ENCODE measurements at regions of chr9 and their contacts with region 1.

Region 1: DNA sequence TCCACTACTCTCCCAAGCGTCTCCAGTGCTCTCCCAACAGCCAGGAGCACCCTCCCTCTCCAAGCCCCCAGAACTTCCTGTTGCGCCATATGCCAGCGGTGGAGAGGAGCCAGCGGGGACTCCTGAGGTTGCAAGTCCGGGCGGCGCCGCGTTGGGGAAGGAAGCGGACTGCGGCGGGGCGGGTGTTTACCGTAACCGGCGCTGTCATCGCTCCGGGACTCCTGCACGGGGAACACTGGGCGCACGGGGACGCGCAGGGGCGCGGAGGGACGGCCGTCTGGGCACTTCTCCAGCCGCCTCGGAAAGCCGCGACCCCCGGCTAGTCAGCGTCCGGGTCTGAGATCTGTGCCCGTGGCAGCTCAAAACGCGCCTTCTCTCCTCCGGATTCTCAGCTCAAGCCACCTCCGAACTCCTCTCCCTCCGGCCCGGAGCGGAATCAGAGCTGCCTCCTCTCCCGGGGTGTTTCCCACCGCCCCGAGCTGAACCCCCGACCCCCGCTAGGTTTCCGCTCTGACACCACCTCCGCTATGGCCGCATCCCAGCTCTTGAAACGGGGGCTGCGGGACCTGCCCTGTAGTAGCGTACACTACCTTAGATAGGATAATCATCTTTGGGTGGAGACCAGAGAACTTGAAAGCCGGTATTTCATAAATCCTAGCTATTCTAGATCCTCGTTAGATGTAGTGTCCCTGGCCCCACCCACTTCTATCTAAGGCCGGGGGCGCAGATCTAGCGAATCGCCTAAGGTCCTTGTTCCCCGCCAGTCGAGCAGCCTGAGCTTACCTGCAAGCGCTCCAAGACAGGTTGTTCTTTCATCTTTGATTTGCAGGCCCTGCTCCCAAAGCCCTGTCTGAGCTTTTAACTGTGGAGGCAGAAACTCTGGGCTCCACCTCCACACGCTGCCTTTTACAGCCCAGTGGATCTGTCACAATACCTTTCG is at the start of gene TRPM6:
- DNase-seq: peak; percentile 76 to 82
- ATAC-seq: peak; percentile 90 to 97 (median 96)
- H3K4me3 ChIP-seq: peak within 1 kb of the TSS in 9 of 10 donors; percentile 41 to 69 (median 66)
- H3K27ac ChIP-seq: peak within 1 kb of the TSS; percentile 25 to 87 (median 78)
- H3K4me1 ChIP-seq: peaks cover 0 to 16% (median 9%) of the 10 kb centered on the region in 9 donors
- H3K27me3 ChIP-seq: peaks cover 0 to 30% (median 10%) of the 10 kb centered on the region in 7 donors
- CTCF ChIP-seq: no peak
- total RNA-seq, gene TRPM6: 0.11 to 0.60 (median 0.21) TPM

Region 2: DNA sequence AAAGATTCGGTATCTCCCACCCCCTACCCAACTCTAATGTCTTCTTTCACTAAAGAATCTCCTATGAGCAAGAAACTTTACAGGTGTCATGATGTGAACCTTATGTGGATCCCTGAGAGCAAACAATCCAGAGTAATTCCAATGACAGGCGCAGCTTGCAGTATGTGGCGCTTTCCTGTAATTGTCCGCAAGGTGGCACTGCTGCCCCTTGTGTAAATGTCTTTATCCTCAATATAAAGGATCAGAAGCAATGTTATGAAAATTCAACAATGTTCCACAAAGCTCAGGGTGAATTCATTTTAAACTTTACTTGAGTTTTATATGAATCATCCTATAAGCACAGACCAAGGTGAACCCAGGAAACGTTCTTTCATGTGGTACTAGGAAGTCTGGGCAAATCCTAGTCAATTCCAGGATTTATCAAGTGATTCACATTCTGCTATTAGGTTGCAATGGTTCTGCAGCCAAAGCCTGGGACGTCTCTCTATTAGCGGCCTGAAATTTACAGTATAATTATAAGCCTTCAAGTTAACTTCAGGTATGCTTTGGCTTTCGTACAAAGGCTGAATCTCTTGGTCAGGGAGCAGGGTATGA is 113.3 kb before region 1 on chr9:
- intact Hi-C with region 1: loop called in 1 of 10 experiments (anchors 10 kb)
- DNase-seq: peak; percentile 65
- ATAC-seq: peak in 7 of 8 donors; percentile 40 to 83 (median 74)
- H3K4me3 ChIP-seq: no peak overlapping the region
- H3K27ac ChIP-seq: no peak overlapping the region
- H3K4me1 ChIP-seq: peaks cover 0 to 9% (median 0%) of the 10 kb centered on the region in 9 donors
- H3K27me3 ChIP-seq: peaks cover 0 to 23% (median 0%) of the 10 kb centered on the region in 7 donors
- CTCF ChIP-seq: peak; percentile 76 to 97 (median 93)

Region 3: GRCh38 chr9:74783408-74783807 is 103.9 kb before region 1 on chr9:
- intact Hi-C with region 1: loop called in 3 of 10 experiments (anchors 10 kb)
- DNase-seq: no peak
- ATAC-seq: no peak
- H3K4me3 ChIP-seq: no peak overlapping the region
- H3K27ac ChIP-seq: no peak overlapping the region
- H3K4me1 ChIP-seq: no peaks in the 10 kb centered on the region
- H3K27me3 ChIP-seq: peaks cover 0 to under 1% (median 0%) of the 10 kb centered on the region in 7 donors
- CTCF ChIP-seq: no peak

Region 4: DNA sequence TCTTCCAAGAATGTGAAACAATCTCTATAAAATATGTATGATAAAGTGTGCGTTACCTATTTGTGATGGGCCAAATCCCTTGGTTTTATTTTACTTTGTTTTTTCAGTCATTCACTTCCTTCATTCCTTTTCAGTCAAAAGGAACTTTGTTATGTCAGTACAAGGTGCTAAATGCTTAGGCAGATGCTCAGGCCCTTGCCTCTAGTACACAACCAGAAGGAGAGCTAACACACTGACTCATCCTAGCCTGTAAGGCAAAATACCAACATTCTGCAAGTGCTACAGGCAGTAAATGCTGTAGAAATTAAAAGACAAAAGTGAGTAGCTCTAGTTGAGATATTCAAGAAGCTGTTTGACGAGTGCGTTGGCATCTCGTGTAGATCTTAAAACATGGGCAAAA is 49.0 kb before region 1 on chr9:
- intact Hi-C with region 1: no loop called
- DNase-seq: no peak
- ATAC-seq: no peak
- H3K4me3 ChIP-seq: no peak overlapping the region
- H3K27ac ChIP-seq: no peak overlapping the region
- H3K4me1 ChIP-seq: no peaks in the 10 kb centered on the region
- H3K27me3 ChIP-seq: no peaks in the 10 kb centered on the region
- CTCF ChIP-seq: no peak

Region 5: DNA sequence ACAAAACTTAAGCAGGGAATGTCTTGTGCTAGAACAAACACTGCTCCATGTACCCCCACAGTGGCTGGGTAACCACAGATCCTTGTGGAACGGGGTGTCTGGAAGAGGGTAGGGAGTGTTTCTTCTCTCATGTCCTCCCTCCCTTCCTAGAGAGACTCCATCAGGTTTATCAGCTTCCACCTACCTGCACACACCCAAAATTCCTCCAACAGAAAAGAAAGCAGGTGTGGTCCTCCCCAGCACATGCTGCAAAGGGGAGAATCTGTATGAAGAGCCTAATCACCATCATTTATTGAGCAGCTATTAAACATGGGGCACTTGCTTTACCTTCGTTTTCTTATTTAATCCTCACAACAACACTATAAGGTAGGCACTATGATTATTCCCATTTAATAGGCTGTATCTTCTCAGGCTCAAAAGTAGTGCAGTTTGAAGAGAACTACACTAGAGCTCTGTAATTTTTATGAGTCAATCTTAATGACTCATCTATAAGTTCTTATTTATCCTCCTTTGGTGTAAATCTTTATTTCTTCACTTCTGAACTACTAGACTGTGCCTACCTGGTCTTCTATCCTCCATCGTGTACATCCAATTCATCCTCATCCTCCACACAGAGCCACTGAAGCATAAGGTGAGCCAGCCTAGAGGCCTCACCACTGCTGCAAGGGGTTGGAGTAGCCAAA is 33.8 kb after region 1 on chr9:
- intact Hi-C with region 1: loop called in 1 of 10 experiments (anchors 2 kb)
- DNase-seq: no peak
- ATAC-seq: no peak
- H3K4me3 ChIP-seq: no peak overlapping the region
- H3K27ac ChIP-seq: no peak overlapping the region
- H3K4me1 ChIP-seq: no peaks in the 10 kb centered on the region
- H3K27me3 ChIP-seq: no peaks in the 10 kb centered on the region
- CTCF ChIP-seq: no peak

Region 6: DNA sequence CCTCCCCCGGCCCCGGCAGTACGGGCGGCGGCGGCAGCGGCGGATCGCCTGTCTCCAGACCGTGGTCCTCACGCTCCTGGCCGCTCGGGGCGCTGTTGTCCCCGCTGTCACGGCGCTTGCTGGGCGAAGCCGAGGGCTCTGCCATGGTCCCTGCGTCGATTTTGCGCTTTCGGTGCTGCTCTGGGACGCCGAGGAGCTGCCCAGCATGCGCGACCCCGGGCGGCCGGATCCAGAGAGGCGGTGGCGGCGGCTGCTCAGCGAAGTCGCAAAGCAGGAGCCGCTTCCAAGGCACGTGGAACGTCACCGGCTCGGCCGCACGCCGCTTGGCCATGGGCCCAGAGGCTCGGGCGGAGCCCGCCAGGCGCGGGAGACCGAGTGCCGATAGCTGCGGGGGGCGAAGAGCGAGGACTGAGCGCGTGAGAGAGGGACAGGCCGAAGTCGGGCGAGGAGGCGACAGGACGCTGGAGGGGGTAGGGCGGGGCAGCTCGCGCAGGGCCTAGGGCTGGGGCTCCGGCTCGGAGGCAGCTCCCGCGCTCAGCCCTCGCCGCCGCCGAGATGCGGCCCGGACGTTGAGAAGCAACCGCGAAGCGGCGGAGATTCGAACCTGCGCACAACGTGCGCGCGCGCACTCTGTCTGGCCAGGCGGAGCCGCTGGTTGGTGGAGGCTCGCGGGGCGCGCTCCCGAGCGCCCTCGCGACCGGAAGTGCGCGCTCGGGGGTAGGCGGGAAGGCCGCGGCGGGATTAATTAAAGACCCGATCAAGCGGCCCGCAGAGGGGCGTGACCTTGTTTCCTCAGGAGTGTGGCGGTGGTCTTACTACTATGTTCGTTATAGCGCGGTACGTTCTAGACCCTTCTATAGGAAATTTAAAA is 65.2 kb after region 1 on chr9 and contains the start of gene C9orf40:
- intact Hi-C with region 1: loop called in 1 of 10 experiments (anchors 5 kb)
- DNase-seq: peak; percentile 91 to 93
- ATAC-seq: peak; percentile 95 to 99 (median 98)
- H3K4me3 ChIP-seq: peak within 1 kb of the TSS; percentile 60 to 98 (median 88)
- H3K27ac ChIP-seq: peak within 1 kb of the TSS; percentile 85 to 99 (median 96)
- H3K4me1 ChIP-seq: peaks cover 0 to 27% (median 17%) of the 10 kb centered on the region in 9 donors
- H3K27me3 ChIP-seq: no peaks in the 10 kb centered on the region
- CTCF ChIP-seq: peak; percentile 76 to 92 (median 86)
- total RNA-seq, gene C9orf40: 0.96 to 2.9 (median 1.9) TPM

Measured in heart right ventricle (tissue), 16 donors.